HAP-1 (cell line): ENCODE measurements at regions of chr14 and their contacts with region 1.

Region 1: DNA sequence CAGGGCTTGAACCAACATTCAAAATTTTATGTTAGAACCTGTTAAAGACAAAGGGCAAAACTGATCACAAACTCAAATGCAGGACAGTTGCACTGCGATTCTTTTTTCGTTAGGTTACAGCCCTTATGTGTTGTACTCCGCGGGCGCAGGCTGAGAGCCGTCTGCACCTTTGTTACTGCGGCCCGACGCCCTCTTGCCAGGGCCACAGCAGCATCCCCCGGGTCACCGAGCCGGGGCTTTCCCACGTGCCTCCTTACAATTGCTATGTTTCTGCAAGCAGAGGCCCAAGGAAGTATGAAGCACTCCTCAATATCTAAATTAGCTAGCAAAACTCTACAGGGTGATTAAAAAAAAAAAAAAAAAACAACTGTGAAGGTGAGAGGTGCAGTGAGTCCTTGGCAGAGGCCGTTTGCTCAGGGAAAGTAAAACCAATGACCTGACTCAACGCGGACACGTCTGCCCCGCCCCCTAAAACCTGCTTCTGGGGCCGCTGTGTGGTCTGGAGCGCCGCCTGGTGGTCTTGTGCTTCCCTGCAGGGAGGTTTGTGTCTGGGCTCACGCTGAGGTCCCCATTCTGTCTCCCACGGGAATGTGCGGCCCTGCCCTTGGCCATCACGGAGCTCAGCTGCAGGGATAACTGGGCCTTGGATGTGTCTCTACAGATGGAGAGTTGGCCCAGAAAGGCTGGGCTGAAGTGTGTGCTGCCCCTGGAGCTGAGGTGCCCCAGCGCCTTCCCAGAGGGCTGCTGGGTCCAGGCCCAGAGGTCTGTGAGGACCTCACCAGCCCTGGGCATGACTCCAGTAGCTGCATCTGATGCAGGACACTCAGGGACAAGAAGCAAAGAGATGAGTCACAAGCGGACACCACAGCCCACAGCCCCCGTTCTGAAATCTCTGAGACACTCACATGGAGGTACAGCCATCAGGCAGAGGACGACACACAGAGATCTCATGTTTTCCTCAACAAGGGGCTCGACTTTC is 418.5 kb downstream of the TMEM121 start:
- DNase-seq: peak; percentile 39 to 88
- H3K4me3 ChIP-seq: no peak overlapping the region
- H3K4me1 ChIP-seq: no peaks in the 10 kb centered on the region
- H3K27me3 ChIP-seq: no peaks in the 10 kb centered on the region

Region 2: DNA sequence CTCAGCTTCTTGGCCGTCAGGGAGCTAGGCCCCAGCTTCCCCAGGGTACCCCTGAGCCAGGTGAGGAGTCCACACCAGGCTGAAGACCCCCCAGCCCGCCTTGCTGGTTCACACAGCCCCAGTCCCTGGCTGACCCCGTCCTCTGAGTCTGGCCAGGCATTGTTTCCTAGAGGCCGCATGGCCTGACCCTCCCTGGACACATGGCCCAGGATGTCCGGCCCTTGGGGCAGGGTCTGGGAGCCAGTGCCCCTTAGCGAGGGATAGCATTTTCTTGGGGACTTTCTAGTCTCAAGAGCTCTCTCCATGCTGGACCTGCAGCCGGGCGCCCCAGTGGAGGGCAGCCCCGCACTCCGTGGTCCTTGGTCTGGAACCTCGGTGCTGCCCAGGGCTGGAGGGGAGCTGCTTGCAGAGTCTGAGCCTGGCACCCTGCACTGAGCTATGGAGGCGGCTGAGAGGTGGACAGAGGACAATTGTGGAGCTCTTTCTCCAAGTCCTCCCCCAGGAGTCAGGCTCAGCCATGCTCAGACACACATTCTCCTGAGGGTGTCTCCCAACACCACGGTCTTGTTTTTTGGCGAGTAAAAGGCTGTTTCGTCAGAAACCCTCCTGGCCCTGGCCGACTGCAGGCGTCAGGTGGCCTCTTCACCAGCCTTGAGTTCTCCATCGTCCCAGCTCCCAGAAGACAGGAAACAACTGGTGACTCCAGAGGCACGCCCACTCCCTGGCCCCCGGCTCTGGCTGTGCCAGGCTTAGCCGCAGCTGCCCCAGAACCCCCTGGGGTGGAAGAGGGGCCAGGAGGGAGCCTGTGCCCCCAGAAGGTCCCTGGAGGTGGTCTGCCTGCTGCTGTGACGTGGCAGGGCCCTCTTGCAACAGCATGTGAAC is 487.9 kb before region 1 on chr14:
- in situ Hi-C with region 1: no loop called
- DNase-seq: no peak
- H3K4me3 ChIP-seq: no peak overlapping the region
- H3K4me1 ChIP-seq: no peaks in the 10 kb centered on the region
- H3K27me3 ChIP-seq: no peaks in the 10 kb centered on the region

Region 3: GRCh38 chr14:105554022-105554421 is 390.9 kb before region 1 on chr14:
- in situ Hi-C with region 1: loop called (anchors 10 kb)
- DNase-seq: no peak
- H3K4me3 ChIP-seq: no peak overlapping the region
- H3K4me1 ChIP-seq: no peaks in the 10 kb centered on the region
- H3K27me3 ChIP-seq: peaks cover 4% of the 10 kb centered on the region

Region 4: DNA sequence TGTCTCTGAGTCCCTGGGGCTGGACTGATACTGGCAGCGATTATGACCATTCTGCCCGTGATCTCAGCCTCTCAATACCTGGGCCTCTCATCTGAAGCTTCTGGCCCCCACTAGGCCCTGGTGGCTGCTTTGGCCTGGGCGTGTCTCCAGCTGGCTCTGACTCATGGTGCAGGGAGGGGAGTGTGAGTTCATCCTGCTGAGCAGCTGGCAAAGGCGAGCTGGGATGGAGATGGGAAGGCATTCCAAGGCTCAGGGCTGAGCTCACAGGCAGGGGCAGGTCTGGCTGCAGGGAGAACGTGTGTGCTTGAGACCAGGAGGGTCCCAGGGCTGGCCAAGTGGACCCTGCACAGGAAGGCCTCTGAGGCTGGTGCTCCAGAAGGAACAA is 196.7 kb before region 1 on chr14:
- in situ Hi-C with region 1: no loop called
- DNase-seq: no peak
- H3K4me3 ChIP-seq: no peak overlapping the region
- H3K4me1 ChIP-seq: no peaks in the 10 kb centered on the region
- H3K27me3 ChIP-seq: no peaks in the 10 kb centered on the region

Region 5: DNA sequence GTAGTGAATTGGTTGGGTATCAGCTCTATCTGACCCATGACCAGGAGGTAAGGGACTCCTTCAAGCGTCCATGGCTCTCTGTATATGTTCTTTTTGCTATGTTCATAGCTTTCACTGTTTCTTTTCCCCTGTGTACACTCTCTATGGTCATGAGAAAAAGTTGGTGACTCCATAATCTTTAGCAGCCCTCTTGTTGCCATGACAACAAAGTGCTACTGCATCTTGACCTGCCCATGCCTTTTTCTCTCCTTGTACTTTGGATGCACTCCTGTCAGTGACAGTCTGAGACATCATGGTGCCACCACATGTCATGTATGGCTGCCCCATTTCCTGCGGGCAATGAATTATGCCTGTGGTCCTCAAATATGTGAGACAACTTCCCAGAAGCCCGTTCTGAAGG is 138.4 kb before region 1 on chr14:
- in situ Hi-C with region 1: no loop called
- DNase-seq: no peak
- H3K4me3 ChIP-seq: no peak overlapping the region
- H3K4me1 ChIP-seq: no peaks in the 10 kb centered on the region
- H3K27me3 ChIP-seq: no peaks in the 10 kb centered on the region

Region 6: GRCh38 chr14:106790189-106791036 is 845.5 kb after region 1 on chr14:
- in situ Hi-C with region 1: no loop called
- DNase-seq: peak; percentile 27 to 87
- H3K4me3 ChIP-seq: no peak overlapping the region
- H3K4me1 ChIP-seq: no peaks in the 10 kb centered on the region
- H3K27me3 ChIP-seq: no peaks in the 10 kb centered on the region